Activated B cell treated with CpG ODN at 0.5 μM for 24 hours (primary cell): ENCODE measurements at regions of chr14 and their contacts with region 1.

Region 1: GRCh38 chr14:95662376-95663186 is 23.6 kb upstream of the TCL1B start:
- DNase-seq: no peak
- ATAC-seq: peak; percentile 16
- H3K4me3 Mint-ChIP-seq: peak overlapping the region; percentile 45
- H3K27ac Mint-ChIP-seq: peak overlapping the region; percentile 90
- H3K4me1 Mint-ChIP-seq: peaks cover 92% of the 10 kb centered on the region
- H3K27me3 Mint-ChIP-seq: peaks cover 29% of the 10 kb centered on the region
- CTCF ChIP-seq: no peak

Region 2: DNA sequence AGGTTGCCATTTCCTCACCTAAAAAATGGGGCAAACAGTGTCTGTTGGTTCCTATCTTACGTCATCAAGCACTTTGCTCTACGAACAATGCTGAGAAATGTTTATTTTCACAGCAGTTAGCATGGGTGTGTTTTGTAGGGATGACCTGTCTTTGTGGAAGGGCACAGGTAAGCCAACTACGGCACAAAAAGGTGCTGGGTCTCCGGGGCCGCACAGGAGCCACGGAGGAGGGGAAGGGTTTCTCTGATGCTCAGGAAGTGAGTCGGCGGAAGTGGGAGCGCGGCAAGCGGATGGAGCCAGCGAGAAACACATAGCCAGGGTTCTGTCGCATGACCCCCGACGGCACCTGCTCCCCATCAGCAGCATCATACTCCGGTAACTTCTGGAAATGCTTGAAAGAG is 41.9 kb before region 1 on chr14:
- CTCF ChIA-PET with region 1: no interaction called
- POLR2A ChIA-PET with region 1: no interaction called
- intact Hi-C with region 1: loop called (anchors 5 kb)
- DNase-seq: no peak
- ATAC-seq: peak; percentile 40
- H3K4me3 Mint-ChIP-seq: peak overlapping the region; percentile 77
- H3K27ac Mint-ChIP-seq: peak overlapping the region; percentile 6
- H3K4me1 Mint-ChIP-seq: peaks cover 14% of the 10 kb centered on the region
- H3K27me3 Mint-ChIP-seq: peaks cover 5% of the 10 kb centered on the region
- CTCF ChIP-seq: no peak

Region 3: DNA sequence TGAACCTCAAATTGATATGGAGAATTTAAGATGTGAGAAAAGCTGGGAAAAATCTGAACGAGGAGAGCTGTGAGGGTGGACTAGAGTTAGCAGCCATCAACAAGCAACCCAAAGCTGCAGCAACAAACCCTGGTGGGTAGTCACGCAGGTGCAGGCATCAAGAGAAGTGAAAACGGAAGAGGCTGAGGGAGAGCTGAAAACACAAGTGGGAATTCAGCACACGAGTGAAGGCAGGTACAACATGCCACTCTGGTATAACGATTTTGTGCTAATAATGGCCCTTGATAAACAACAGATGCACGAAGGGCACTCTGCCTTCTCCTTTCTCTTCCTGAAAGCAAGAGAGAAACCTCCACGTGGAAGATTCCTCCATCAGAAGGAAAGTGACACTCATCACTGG is 35.2 kb after region 1 on chr14:
- CTCF ChIA-PET with region 1: interaction called, 3 read pairs
- POLR2A ChIA-PET with region 1: interaction called, 68 read pairs
- intact Hi-C with region 1: loop called (anchors 5 kb)
- DNase-seq: no peak
- ATAC-seq: peak; percentile 64
- H3K4me3 Mint-ChIP-seq: peak overlapping the region; percentile 74
- H3K27ac Mint-ChIP-seq: peak overlapping the region; percentile 94
- H3K4me1 Mint-ChIP-seq: peaks cover 96% of the 10 kb centered on the region
- H3K27me3 Mint-ChIP-seq: peaks cover 6% of the 10 kb centered on the region
- CTCF ChIP-seq: no peak

Region 4: DNA sequence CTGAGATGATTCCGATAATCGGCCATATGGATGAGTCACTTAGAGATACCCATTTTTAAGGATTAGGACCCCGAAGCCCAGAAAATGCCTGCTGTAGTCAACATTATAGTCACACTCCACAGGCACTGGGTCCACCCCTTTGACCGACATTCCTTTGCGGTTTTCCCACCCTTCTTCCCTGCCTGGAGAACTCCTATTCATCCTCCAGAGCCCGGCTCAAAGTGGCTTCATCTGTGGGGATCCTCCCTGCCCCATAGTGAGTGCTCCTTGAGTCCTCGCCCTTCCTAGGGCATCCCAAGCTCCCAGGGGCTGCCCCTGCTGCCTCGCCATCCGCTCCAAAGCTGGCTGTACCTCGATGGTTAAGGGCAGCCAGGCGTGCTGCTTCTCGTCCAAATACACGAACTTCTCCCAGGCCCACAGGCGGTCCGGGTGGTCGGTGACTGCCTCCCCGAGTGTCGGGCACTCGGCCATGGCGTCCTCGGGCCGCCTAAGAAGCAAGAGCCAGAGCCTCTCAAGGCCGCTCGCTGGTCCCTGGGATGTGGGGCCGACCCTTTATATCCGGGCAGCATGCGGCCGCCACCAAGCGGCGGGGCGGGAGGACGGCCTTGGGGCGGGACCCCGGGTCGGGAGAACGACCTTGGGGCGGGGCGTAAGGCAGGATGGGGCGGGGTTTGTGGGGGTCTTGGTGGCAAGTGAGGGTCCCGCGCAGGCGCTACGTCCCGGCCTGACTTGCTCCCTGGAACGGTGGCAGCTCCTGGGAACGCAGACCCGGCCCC is 51.2 kb after region 1 on chr14 and contains the start of gene TCL1A:
- CTCF ChIA-PET with region 1: interaction called, 4 read pairs
- POLR2A ChIA-PET with region 1: interaction called, 15 read pairs
- intact Hi-C with region 1: no loop called
- DNase-seq: peak; percentile 66
- ATAC-seq: peak; percentile 76
- H3K4me3 Mint-ChIP-seq: peak within 1 kb of the TSS; percentile 94
- H3K27ac Mint-ChIP-seq: peak within 1 kb of the TSS; percentile 97
- H3K4me1 Mint-ChIP-seq: peaks cover 80% of the 10 kb centered on the region
- H3K27me3 Mint-ChIP-seq: peaks cover 23% of the 10 kb centered on the region
- CTCF ChIP-seq: no peak
- total RNA-seq, gene TCL1A: 228 and 234 TPM in 2 replicates